ENCODE measurements at regions of chr9 and their contacts with region 1.

Region 1: GRCh38 chr9:69207503-69207902 is 33.4 kb downstream of the TJP2 start:
- H3K4me3 ChIP-seq: no peak overlapping the region
- H3K27ac ChIP-seq: no peak overlapping the region
- H3K4me1 ChIP-seq: no peaks in the 10 kb centered on the region; the same call in 1 of the 2 replicates
- CTCF ChIP-seq: no peak

Region 2: GRCh38 chr9:69085569-69086283 is 121.8 kb before region 1 on chr9:
- CTCF ChIA-PET with region 1: no interaction called
- POLR2A ChIA-PET with region 1: interaction called, 12 read pairs
- H3K4me3 ChIP-seq: no peak overlapping the region
- H3K27ac ChIP-seq: no peak overlapping the region
- H3K4me1 ChIP-seq: peaks cover 2% of the 10 kb centered on the region; the same call in 1 of the 2 replicates
- CTCF ChIP-seq: no peak